PC-9 (cell line): ENCODE measurements at regions of chr5 and their contacts with region 1.

Region 1: DNA sequence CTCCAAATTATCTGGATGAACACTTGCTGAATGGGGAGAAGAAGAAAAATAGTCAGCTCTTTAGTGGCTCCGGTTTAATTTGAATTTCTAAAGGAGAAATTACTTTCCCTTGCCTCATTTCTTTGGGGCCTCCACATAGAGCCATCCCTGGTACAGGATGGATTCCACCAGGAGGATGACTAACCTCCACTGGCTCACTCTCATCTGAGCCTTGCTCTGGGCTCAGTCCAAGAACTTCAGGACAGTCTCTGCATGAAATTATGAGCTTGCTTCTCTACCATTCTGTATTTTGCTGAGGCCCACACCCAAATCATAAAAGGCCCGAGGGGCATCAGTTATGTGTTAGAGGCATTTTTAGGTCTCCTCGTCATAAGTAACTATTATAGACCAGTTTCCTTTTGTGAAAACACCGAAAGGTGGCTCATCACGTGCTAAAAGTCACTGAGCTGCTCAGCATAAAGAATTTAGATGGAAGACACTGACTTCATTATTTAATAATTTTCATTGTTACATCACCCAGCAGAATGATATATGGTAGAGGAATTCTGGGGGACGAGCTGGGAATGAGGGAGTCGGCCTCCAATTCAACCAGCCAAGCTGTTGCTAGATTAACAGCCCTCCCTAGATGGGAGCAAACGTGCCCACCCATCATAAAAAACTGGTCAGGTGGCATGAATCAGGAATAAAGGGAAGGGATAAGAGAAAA is 222.1 kb downstream of the TARS1 start:
- DNase-seq: no peak
- H3K4me3 ChIP-seq: no peak overlapping the region
- H3K27ac ChIP-seq: no peak overlapping the region
- H3K4me1 ChIP-seq: no peaks in the 10 kb centered on the region
- H3K27me3 ChIP-seq: no peaks in the 10 kb centered on the region
- CTCF ChIP-seq: no peak

Region 2: GRCh38 chr5:33649796-33650482 is 12.9 kb before region 1 on chr5:
- CTCF ChIA-PET with region 1: no interaction called
- POLR2A ChIA-PET with region 1: interaction called, 10 read pairs
- intact Hi-C with region 1: no loop called
- DNase-seq: peak; percentile 72 to 90
- H3K4me3 ChIP-seq: no peak overlapping the region
- H3K27ac ChIP-seq: peak overlapping the region; percentile 30
- H3K4me1 ChIP-seq: peaks cover 30% of the 10 kb centered on the region
- H3K27me3 ChIP-seq: no peaks in the 10 kb centered on the region
- CTCF ChIP-seq: no peak

Region 3: GRCh38 chr5:33806738-33807442 is 144.0 kb after region 1 on chr5:
- CTCF ChIA-PET with region 1: interaction called, 11 read pairs
- POLR2A ChIA-PET with region 1: no interaction called
- intact Hi-C with region 1: no loop called
- DNase-seq: no peak
- H3K4me3 ChIP-seq: no peak overlapping the region
- H3K27ac ChIP-seq: peak overlapping the region; percentile 46
- H3K4me1 ChIP-seq: peaks cover 37% of the 10 kb centered on the region
- H3K27me3 ChIP-seq: no peaks in the 10 kb centered on the region
- CTCF ChIP-seq: no peak

Region 4: DNA sequence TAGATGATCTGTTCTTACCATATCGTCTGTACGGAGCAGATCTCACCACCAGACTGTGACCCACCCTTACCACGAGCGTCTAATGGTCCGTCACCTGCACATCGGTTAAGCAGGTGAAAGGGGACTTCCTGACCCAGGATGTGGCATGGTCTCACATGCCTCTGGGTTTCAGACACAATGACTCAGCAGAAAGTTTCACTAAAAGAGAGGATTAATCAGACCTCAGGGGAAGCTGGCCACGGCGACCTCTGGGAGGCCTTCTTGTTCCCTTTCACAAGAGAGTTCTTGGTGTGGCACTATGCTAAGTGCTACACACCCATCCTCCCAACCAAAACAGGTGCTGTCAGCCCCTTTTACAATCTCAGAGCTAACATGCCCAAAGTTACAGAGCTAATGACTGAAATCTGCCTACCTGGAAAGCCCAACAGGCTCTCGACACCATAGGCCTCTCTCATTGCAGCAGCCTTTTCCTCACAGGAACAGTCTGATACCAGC is 187.3 kb after region 1 on chr5:
- CTCF ChIA-PET with region 1: no interaction called
- POLR2A ChIA-PET with region 1: no interaction called
- intact Hi-C with region 1: no loop called
- DNase-seq: peak; percentile 93 to 97
- H3K4me3 ChIP-seq: peak overlapping the region; percentile 31; the same call in 1 of the 2 replicates
- H3K27ac ChIP-seq: peak overlapping the region; percentile 88
- H3K4me1 ChIP-seq: peaks cover 55% of the 10 kb centered on the region
- H3K27me3 ChIP-seq: no peaks in the 10 kb centered on the region
- CTCF ChIP-seq: no peak